GM23248 (cell line): ENCODE measurements at regions of chr4 and their contacts with region 1.

Region 1: DNA sequence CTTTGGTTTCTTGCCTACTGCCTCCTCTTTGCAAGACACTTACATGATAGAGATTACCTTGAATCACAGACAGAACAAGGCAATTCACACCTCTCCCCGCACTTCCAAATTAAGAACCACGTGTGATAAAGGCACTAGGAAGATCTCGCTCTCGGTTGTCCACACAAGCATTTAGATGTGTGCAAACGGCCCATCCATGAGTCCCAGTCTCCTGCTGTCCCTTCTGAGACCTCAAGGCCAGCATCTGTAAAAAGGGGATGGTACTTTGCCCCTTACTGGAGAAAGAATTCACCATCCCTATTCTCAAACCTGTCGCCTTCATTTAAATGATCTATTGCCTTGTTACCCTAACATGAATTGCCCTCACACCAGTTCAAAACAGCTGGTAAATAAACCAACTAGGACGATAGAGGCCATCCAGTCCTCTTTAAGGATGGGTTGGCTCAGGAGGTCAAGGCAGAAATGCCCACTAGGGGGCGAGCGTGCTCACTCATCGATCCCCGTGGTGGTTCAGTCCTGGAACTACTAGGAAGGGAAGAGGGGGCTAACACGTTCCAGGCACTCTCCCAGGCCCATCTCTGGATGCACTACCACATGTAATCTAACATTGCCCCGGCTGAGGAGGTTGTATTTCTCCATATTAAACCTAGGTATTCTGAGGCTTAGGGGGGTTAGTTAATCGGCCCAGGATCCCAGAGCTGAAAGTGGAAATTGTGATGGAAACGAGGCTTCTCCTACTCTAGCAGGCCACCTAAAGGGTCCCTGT is 95.8 kb downstream of the DHX15 start:
- DNase-seq: peak; percentile 69
- H3K4me3 ChIP-seq: no peak overlapping the region
- H3K27ac ChIP-seq: no peak overlapping the region
- H3K4me1 ChIP-seq: no peaks in the 10 kb centered on the region
- H3K27me3 ChIP-seq: peaks cover 7% of the 10 kb centered on the region; the same call in 1 of the 2 replicates

Region 2: DNA sequence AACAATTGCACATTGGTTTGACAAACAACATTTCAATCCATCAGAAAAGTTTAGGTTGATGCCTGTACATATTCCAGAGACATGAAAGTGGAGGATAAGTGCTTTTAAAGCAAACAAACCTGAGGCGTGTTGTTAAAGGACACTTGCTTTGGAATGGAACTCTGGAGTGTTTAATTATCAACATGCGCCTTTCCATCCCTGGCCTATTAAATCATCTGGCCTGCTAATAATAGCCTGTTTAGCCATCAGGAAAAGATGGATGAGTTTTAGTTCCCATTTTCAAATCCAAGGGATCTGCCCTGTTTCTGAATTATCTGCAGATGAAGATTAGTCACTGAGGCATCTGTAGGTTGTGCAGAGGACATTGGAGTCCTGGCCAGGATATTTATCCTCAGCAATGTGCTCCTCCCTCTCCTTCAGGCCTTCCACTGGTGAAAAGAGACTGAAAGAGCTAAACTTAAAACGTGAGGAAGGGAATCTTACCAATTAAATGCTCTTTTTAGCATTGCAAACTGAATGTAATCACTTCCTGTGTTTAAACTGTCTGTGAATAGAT is 987.6 kb before region 1 on chr4:
- in situ Hi-C with region 1: no loop called
- DNase-seq: no peak
- H3K4me3 ChIP-seq: no peak overlapping the region
- H3K27ac ChIP-seq: no peak overlapping the region
- H3K4me1 ChIP-seq: no peaks in the 10 kb centered on the region
- H3K27me3 ChIP-seq: no peaks in the 10 kb centered on the region

Region 3: GRCh38 chr4:24980064-24980690 is 491.6 kb after region 1 on chr4:
- in situ Hi-C with region 1: loop called (anchors 10 kb)
- DNase-seq: peak; percentile 91
- H3K4me3 ChIP-seq: peak overlapping the region; percentile 66
- H3K27ac ChIP-seq: peak overlapping the region; percentile 48
- H3K4me1 ChIP-seq: 0 out of 2 replicates have a peak, but pooled peaks cover 4% of the 10 kb centered on the region
- H3K27me3 ChIP-seq: no peaks in the 10 kb centered on the region